ENCODE measurements at regions of chr10 and their contacts with region 1.

Region 1: DNA sequence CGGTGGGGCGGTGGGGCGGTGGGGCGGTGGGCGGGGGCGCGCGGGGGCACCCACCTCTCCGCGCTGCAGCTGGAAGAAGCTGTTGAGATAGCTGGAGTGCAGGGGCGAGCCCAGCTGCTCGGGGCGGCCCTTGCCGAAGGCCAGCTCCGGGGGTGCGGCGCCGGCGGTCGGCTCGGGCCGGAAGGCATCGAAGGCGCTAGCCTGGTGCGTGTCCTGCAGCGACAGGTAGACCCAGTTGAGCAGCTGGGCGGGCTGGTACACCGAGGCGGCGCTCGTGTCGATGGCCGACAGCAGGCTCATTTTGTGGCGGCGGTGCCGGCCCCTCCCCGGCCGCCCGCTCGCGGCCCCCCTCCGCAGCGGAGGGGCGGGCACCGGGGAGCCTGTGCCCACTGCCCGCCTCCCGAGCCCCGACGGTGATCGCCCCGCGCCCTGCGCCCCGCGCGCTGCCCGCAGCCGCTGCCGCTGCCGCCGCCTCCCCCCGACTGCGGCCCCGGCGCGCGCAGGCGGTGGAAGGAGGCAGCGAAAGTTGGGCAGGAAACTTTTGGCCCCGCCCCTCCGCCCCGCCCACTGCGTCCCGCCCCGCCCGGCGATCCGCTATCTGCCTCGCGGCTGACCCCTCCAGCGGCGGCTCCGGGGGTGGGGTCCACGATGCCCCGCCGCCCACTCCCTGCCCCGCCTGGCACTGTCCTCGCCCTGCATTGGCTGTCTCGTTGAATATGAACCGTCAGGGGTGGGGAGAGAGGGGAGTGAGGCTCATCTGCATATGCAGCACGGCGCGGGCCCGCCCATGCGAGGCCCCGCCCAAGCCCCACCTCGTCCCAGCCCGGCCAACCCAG is at the start of gene ZCCHC24:
- DNase-seq: peak; percentile 98 to 99 (median 99)
- ATAC-seq: peak; percentile 95
- H3K4me3 ChIP-seq: peak within 1 kb of the TSS; percentile 59
- H3K27ac ChIP-seq: peak within 1 kb of the TSS; percentile 89
- H3K4me1 ChIP-seq: peaks cover 43 to 54% of the 10 kb centered on the region in 2 experiments
- H3K27me3 ChIP-seq: no peaks in the 10 kb centered on the region
- CTCF ChIP-seq: no peak
- EP300 ChIP-seq: no peak
- POLR2A ChIP-seq: no peak
- RAD21 ChIP-seq: peak in 1 of 2 experiments; percentile 8; a peak in 1 of 4 replicates
- polyA plus RNA-seq, gene ZCCHC24: 0.84 to 0.86 TPM

Region 2: DNA sequence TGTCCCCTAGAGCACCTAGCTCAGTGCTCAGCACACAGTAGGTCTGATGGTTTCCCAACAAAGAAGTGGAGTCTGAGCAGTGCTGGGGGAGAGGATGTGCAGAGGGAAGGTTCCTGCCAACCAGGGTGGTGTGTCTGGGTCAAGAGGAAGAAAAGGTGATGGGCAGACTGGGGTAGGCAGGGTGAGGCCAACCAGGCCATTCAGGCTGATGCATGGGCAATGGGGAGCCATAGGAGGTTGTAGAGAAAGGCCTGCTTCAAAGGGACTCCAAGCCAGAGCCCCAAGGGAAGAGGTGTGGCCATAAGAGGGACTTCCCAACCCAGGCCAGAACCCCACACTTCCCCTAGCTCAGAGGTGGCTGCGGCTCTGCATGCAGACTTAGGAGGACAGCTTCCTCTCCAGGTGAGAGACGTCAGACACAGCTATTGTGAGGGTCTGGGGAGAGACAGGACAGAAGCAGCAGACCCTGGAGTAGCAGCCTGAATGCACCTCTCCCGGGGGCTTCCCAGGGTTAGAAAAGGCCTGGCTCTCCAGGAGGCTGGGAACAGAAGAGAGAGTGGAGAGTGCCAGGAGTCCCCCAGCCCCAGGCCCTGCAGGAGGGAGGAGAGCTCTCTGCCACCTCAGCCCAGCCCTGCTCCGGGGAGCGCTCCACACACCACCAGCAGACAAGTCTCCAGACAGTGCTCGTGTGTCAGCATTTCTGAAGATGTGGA is 463.9 kb before region 1 on chr10:
- CTCF ChIA-PET with region 1: no interaction called
- POLR2A ChIA-PET with region 1: no interaction called
- in situ Hi-C with region 1: no loop called
- intact Hi-C with region 1: no loop called
- DNase-seq: no peak
- ATAC-seq: peak; percentile 17; the same call in 2 of the 3 replicates
- H3K4me3 ChIP-seq: no peak overlapping the region
- H3K27ac ChIP-seq: no peak overlapping the region
- H3K4me1 ChIP-seq: peaks cover 0 to 4% of the 10 kb centered on the region in 2 experiments; a peak in 2 of 5 replicates
- H3K27me3 ChIP-seq: peaks cover 55 to 91% of the 10 kb centered on the region in 2 experiments
- CTCF ChIP-seq: no peak
- EP300 ChIP-seq: no peak
- POLR2A ChIP-seq: no peak
- RAD21 ChIP-seq: no peak

Region 3: GRCh38 chr10:79390551-79391209 is 54.7 kb before region 1 on chr10:
- CTCF ChIA-PET with region 1: no interaction called
- POLR2A ChIA-PET with region 1: interaction called, 6 read pairs
- in situ Hi-C with region 1: no loop called
- intact Hi-C with region 1: loop called (anchors 2 kb)
- DNase-seq: peak; percentile 86 to 91 (median 88)
- ATAC-seq: peak; percentile 83
- H3K4me3 ChIP-seq: peak overlapping the region; percentile 9
- H3K27ac ChIP-seq: peak overlapping the region; percentile 83
- H3K4me1 ChIP-seq: peaks cover 47 to 61% of the 10 kb centered on the region in 2 experiments
- H3K27me3 ChIP-seq: no peaks in the 10 kb centered on the region
- CTCF ChIP-seq: peak; percentile 83 to 86 (median 84)
- EP300 ChIP-seq: no peak
- POLR2A ChIP-seq: peak; percentile 70
- RAD21 ChIP-seq: peak; percentile 39 to 61

Region 4: DNA sequence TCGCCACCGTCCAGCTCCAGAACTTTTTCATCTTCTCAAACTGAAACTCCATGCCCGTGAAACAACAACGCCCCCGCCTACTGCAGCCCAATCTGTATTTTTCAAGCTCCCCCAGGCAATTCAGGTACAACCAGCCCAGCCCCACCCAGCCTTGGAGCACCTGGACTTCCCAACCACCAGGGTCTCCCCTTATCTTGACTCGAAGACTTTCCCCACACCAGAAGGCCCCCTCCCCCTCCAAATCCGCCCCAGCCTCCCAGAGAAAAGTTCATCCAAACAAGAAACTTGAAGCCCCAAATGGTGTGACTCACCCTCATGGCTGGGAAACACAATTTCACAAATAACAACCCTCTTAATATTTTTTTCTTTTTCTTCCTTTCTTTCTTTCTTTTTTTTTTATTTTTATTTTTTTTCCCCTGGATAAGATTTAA is 10.5 kb before region 1 on chr10:
- CTCF ChIA-PET with region 1: no interaction called
- POLR2A ChIA-PET with region 1: interaction called, 11 read pairs
- in situ Hi-C with region 1: no loop called
- intact Hi-C with region 1: no loop called
- DNase-seq: peak; percentile 55 to 59 (median 56)
- ATAC-seq: no peak
- H3K4me3 ChIP-seq: no peak overlapping the region
- H3K27ac ChIP-seq: peak overlapping the region; percentile 25; the same call in 1 of the 3 replicates
- H3K4me1 ChIP-seq: peaks cover 11 to 28% of the 10 kb centered on the region in 2 experiments
- H3K27me3 ChIP-seq: no peaks in the 10 kb centered on the region
- CTCF ChIP-seq: no peak
- EP300 ChIP-seq: 0 out of 2 replicates have a peak, but pooled peaks have one; percentile 8
- POLR2A ChIP-seq: no peak
- RAD21 ChIP-seq: no peak